WTC11 (cell line): ENCODE measurements at regions of chr7 and their contacts with region 1.

Region 1: GRCh38 chr7:8277394-8277982 is 15.5 kb upstream of the ICA1 start:
- DNase-seq: no peak
- ATAC-seq: peak; percentile 92
- H3K4me3 Mint-ChIP-seq: no peak overlapping the region
- H3K27ac Mint-ChIP-seq: no peak overlapping the region
- H3K4me1 Mint-ChIP-seq: peaks cover 5% of the 10 kb centered on the region
- H3K27me3 Mint-ChIP-seq: no peaks in the 10 kb centered on the region
- CTCF ChIP-seq: 0 out of 2 replicates have a peak, but pooled peaks have one; percentile 30

Region 2: GRCh38 chr7:8190119-8190895 is 87.2 kb before region 1 on chr7:
- CTCF ChIA-PET with region 1: no interaction called
- POLR2A ChIA-PET with region 1: no interaction called
- DNase-seq: peak; percentile 36
- ATAC-seq: peak; percentile 65
- H3K4me3 Mint-ChIP-seq: no peak overlapping the region
- H3K27ac Mint-ChIP-seq: peak overlapping the region; percentile 69
- H3K4me1 Mint-ChIP-seq: peaks cover 34% of the 10 kb centered on the region
- H3K27me3 Mint-ChIP-seq: no peaks in the 10 kb centered on the region
- CTCF ChIP-seq: 0 out of 2 replicates have a peak, but pooled peaks have one; percentile 18

Region 3: GRCh38 chr7:8290645-8291314 is 13.3 kb after region 1 on chr7:
- CTCF ChIA-PET with region 1: interaction called, 71 read pairs
- POLR2A ChIA-PET with region 1: no interaction called
- DNase-seq: no peak
- ATAC-seq: peak; percentile 66
- H3K4me3 Mint-ChIP-seq: no peak overlapping the region
- H3K27ac Mint-ChIP-seq: no peak overlapping the region
- H3K4me1 Mint-ChIP-seq: peaks cover 69% of the 10 kb centered on the region
- H3K27me3 Mint-ChIP-seq: no peaks in the 10 kb centered on the region; the same call in 1 of the 2 replicates
- CTCF ChIP-seq: no peak

Region 4: DNA sequence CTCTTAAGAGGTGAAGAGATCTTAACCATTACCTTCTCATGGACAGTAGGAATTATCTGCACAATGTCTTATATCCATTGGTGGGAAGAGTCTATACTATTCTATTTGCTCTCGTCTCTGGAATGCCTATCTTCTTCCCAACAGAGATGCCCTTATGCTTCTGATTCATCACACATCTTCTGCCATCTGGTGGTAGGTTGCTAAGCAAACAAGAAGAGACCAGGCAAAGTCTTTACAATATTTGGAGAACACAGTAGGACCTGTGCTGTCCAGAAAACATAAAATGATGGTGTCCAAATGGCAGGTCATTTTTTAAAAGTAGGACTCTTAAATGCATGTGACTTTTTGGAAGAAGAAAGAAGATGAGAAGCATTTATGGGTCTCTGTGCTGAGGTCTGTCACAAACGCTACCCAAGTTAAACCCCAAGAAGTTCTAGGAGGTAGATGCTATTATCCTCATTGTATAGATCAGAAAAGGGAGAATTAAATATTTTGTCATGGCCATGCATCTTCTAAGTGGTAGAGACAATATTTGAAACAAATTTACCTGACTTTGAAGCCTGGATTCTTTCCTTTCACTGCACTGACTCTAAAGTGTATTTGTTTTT is 88.1 kb after region 1 on chr7:
- CTCF ChIA-PET with region 1: interaction called, 11 read pairs
- POLR2A ChIA-PET with region 1: no interaction called
- DNase-seq: no peak
- ATAC-seq: peak; percentile 69
- H3K4me3 Mint-ChIP-seq: no peak overlapping the region
- H3K27ac Mint-ChIP-seq: peak overlapping the region; percentile 52; the same call in 1 of the 2 replicates
- H3K4me1 Mint-ChIP-seq: peaks cover 44% of the 10 kb centered on the region
- H3K27me3 Mint-ChIP-seq: no peaks in the 10 kb centered on the region
- CTCF ChIP-seq: no peak

Region 5: DNA sequence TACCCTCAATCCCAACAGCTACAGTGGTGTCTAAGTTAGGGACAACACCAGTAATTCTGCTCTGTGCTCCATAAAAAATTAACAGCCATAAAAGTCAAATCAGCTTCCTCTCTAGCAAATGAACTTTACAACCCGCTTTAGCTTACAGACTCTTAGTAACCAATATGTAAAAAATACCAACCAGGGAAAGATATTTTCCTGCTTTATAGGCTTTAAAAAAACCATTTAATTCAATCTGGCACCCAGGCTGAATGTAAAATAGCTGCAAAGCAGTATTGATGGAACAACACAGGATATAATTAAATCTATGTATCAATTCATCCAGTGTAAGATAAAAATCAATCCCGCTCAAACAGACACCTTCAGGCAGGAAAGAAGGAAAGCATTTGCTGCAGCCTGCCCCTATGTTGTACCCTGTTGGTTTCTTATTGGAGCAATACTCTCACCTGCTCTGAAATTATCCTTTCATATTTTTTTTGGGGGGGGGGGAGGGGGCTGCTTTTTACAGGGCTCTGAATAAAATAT is 254.6 kb after region 1 on chr7:
- CTCF ChIA-PET with region 1: no interaction called
- POLR2A ChIA-PET with region 1: no interaction called
- DNase-seq: no peak
- ATAC-seq: no peak
- H3K4me3 Mint-ChIP-seq: no peak overlapping the region
- H3K27ac Mint-ChIP-seq: no peak overlapping the region
- H3K4me1 Mint-ChIP-seq: no peaks in the 10 kb centered on the region
- H3K27me3 Mint-ChIP-seq: no peaks in the 10 kb centered on the region
- CTCF ChIP-seq: no peak